Activated naive CD4-positive, alpha-beta T cell treated with anti-CD3 and anti-CD28 coated beads for 36 hours (primary cell): ENCODE measurements at regions of chr19 and their contacts with region 1.

Region 1: GRCh38 chr19:892243-893050 is 540 bp downstream of the MED16 start:
- DNase-seq: peak; percentile 37
- H3K4me3 Mint-ChIP-seq: peak overlapping the region; percentile 82
- H3K27ac Mint-ChIP-seq: peak overlapping the region; percentile 98
- H3K4me1 Mint-ChIP-seq: peaks cover 14% of the 10 kb centered on the region
- H3K27me3 Mint-ChIP-seq: no peaks in the 10 kb centered on the region

Region 2: DNA sequence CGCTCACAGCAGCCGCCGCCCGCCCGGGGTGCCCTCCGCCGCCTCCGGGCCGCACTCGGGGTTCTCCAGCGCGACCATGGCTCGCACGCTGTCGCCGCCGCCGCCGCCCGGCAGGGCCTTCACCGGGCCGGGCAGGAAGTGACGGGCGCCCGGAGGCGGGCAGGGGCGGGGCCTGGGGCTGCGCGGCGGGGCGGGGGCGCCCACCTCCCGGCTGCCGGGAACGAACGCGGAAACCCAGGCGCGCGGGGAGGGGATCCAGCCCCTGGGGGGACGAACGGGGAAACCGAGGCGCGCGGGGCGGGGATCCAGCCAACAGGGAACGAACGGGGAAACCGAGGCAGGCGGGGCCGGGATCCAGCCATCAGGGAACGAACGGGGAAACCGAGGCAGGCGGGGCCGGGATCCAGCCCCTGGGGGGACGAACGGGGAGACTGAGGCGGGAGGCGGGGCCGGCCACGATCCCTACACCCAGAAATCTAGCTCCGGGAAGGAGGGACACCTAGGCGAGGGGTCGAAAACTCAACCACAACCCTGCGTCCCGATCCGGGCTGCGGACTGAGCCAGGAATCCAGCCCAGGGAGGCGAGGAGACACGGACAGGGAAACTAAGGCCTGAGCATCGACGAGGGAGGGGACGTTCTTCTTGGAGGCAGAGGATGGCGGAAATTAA is 20.8 kb after region 1 on chr19 and contains the start of gene R3HDM4:
- CTCF ChIA-PET with region 1: no interaction called
- intact Hi-C with region 1: loop called (anchors 1 kb)
- DNase-seq: peak; percentile 88
- H3K4me3 Mint-ChIP-seq: peak within 1 kb of the TSS; percentile 84
- H3K27ac Mint-ChIP-seq: peak within 1 kb of the TSS; percentile 95
- H3K4me1 Mint-ChIP-seq: peaks cover 34% of the 10 kb centered on the region
- H3K27me3 Mint-ChIP-seq: peaks cover 2% of the 10 kb centered on the region
- total RNA-seq, gene R3HDM4: 111 to 120 TPM

Region 3: DNA sequence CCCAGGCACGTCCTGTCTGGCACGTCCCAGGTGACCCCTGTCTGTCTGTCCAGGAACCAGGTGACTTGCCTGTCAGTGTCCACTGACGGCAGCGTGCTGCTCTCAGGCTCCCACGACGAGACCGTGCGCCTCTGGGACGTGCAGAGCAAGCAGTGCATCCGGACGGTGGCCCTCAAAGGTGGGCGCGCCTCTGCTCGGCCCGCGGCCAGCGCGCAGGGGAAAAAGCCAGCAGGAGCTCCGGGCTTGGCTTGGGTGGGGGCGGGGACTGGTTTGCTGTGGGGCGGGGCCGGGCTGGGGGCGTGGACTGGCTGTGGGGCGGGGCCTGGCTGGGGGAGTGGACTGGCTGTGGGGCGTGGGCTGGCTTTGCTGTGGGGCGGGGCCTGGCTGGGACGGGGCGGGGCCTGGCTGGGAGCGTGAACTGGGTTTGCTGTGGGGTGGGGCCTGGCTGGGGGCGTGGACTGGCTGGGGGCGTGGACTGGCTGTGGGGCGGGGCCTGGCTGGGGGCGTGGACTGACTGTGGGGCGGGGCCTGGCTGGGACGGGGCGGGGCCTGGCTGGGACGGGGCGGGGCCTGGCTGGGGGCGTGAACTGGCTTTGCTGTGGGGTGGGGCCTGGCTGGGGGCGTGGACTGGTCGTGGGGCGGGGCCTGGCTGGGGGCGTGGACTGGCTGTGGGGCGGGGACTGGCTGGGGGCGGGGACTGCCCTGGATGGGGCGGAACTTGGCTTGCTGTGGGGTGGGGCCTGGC is 98.9 kb after region 1 on chr19:
- CTCF ChIA-PET with region 1: no interaction called
- intact Hi-C with region 1: no loop called
- DNase-seq: peak; percentile 71
- H3K4me3 Mint-ChIP-seq: no peak overlapping the region
- H3K27ac Mint-ChIP-seq: no peak overlapping the region
- H3K4me1 Mint-ChIP-seq: peaks cover 8% of the 10 kb centered on the region
- H3K27me3 Mint-ChIP-seq: no peaks in the 10 kb centered on the region

Region 4: DNA sequence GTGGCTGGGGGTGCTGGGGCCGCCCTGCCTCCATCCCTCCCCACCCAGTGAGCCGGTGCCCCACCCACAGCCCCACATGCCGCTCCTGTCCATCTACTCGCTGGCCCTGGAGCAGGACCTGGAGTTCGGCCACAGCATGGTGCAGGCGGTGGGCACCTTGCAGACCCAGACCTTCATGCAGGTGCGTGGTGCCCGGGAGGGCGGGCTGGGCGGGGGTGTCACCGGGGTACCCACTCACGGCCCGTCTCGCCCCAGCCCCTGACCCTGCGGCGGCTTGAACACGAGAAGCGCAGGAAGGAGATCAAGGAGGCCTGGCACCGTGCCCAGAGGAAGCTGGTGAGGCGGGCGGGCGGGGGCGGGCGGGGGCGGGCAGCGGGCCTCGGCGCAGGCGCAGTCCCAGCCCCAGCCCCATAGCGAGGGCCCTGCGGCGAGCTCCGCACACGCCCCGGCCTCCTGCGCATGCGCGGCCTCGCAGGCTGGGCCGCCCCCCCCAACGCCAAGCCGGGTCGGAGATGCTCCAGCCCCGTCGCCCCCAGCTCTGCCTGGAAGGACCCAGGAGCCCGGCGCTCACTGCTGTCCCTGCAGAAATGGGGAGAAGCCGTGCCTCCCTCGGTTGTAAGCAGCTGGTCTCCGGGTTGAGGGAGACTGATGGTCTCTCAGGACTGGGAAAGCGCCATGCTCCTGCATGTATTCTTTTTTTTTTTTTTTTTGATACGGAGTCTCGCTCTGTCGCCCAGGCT is 182.3 kb after region 1 on chr19:
- CTCF ChIA-PET with region 1: no interaction called
- intact Hi-C with region 1: no loop called
- DNase-seq: peak; percentile 93
- H3K4me3 Mint-ChIP-seq: peak overlapping the region; percentile 59
- H3K27ac Mint-ChIP-seq: peak overlapping the region; percentile 75
- H3K4me1 Mint-ChIP-seq: peaks cover 66% of the 10 kb centered on the region
- H3K27me3 Mint-ChIP-seq: no peaks in the 10 kb centered on the region

Region 5: GRCh38 chr19:1168877-1169791 is 276.7 kb after region 1 on chr19:
- CTCF ChIA-PET with region 1: no interaction called
- intact Hi-C with region 1: no loop called
- DNase-seq: no peak
- H3K4me3 Mint-ChIP-seq: no peak overlapping the region
- H3K27ac Mint-ChIP-seq: no peak overlapping the region
- H3K4me1 Mint-ChIP-seq: peaks cover 28% of the 10 kb centered on the region
- H3K27me3 Mint-ChIP-seq: no peaks in the 10 kb centered on the region